CD8-positive, alpha-beta T cell (primary cell): ENCODE measurements at regions of chr19 and their contacts with region 1.

Region 1: DNA sequence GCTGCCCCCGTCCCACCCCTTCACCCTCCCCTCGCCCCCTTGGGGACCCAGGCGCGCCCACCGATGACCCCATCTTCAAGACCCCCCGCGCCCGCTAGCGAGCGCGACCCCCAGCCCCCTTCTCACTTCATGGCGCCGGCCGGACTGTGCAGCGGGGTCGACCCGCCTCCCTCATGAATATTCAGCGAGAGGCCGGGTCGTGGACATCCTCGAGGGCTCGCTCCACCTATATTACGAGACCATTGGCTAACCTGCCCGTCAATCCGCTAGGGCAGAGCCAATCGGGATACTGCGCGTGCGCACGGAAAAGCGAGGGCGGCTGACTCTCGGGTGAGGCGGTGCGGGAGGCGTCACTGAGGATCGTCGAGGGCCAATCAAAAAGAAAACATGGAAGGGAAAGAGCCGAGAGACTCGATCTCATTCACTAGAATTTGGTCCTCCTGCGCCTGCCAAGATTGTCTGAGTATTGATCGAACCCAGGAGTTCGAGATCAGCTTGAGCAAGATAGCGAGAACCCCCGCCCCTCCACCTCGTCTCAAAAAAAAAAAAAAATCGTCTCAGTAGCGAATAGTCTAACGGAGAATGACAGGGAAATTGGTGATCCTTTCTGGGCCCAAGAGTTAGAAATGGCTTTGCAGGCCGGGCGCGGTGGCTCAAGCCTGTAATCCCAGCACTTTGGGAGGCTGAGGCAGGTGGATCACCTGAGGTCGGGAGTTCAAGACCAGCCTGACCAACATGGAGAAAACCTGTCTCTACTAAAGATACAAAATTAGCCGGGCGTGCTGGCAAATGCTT is at the start of gene ERCC2:
- DNase-seq: peak; percentile 99 to 100 (median 99)
- ATAC-seq: peak; percentile 99
- H3K4me3 ChIP-seq: peak within 1 kb of the TSS; percentile 84 to 89
- H3K4me3 Mint-ChIP-seq: peak within 1 kb of the TSS; percentile 95
- H3K27ac ChIP-seq: peak within 1 kb of the TSS; percentile 54 to 90
- H3K27ac Mint-ChIP-seq: peak within 1 kb of the TSS; percentile 99
- H3K4me1 ChIP-seq: peaks cover 7% of the 10 kb centered on the region
- H3K4me1 Mint-ChIP-seq: peaks cover 14% of the 10 kb centered on the region
- H3K27me3 ChIP-seq: no peaks in the 10 kb centered on the region
- H3K27me3 Mint-ChIP-seq: no peaks in the 10 kb centered on the region
- CTCF ChIP-seq: no peak
- total RNA-seq, gene ERCC2: 9.1 to 11.8 TPM

Region 2: GRCh38 chr19:45092747-45093678 is 277.6 kb before region 1 on chr19 and contains the start of gene PPP1R37:
- CTCF ChIA-PET with region 1: no interaction called
- POLR2A ChIA-PET with region 1: no interaction called
- intact Hi-C with region 1: loop called in 1 of 2 experiments (anchors 2 kb)
- DNase-seq: peak; percentile 76 to 97 (median 92)
- ATAC-seq: peak; percentile 76
- H3K4me3 ChIP-seq: peak within 1 kb of the TSS; percentile 64 to 88
- H3K4me3 Mint-ChIP-seq: peak within 1 kb of the TSS; percentile 93
- H3K27ac ChIP-seq: peak within 1 kb of the TSS; percentile 84 to 96
- H3K27ac Mint-ChIP-seq: peak within 1 kb of the TSS; percentile 97
- H3K4me1 ChIP-seq: peaks cover 51% of the 10 kb centered on the region
- H3K4me1 Mint-ChIP-seq: peaks cover 67% of the 10 kb centered on the region
- H3K27me3 ChIP-seq: no peaks in the 10 kb centered on the region
- H3K27me3 Mint-ChIP-seq: no peaks in the 10 kb centered on the region
- CTCF ChIP-seq: peak; percentile 43
- total RNA-seq, gene PPP1R37: 19.3 to 19.9 TPM

Region 3: DNA sequence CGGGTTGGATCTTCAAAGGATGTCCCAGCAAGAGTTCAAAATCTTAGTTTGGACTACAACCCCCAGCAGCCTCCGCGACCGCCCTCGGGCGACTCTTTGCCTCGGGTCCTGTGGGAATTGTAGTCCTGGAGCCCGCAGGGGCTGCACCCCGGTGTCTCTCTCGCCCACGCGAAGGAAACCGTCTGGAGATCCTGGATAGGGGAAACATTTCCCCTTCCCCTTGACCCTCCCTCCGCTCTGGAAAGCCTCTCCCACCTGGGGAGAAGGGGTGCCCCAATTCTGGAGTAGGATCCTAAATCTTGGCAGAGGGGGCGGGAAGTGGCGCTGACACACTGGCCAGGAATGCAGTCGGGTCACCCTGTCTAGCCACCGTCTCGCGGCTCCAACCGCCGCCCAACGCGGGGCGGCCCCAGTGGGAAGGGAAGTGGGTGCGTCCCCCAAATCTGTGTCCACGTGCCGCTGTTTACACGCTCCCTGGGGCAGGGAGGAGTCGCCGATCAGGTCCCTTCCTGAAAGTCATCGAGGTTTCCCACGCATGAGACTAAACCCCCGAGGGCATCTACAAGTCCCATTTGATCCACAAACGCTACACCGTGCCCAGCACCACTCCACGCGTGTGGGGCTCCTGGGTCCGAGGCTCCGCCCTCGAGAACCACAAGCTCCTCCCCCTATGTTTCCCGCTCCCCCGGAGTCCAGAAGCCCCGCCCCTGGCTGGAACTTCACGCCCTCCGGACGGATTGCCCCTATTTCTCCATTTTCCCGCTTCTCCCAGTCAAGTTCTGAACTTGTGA is 35.0 kb after region 1 on chr19:
- CTCF ChIA-PET with region 1: no interaction called
- POLR2A ChIA-PET with region 1: no interaction called
- intact Hi-C with region 1: loop called (anchors 1 kb)
- DNase-seq: peak; percentile 69 to 89 (median 85)
- ATAC-seq: peak; percentile 63
- H3K4me3 ChIP-seq: peak overlapping the region; percentile 63 to 85
- H3K4me3 Mint-ChIP-seq: peak overlapping the region; percentile 97
- H3K27ac ChIP-seq: peak overlapping the region; percentile 68 to 92
- H3K27ac Mint-ChIP-seq: peak overlapping the region; percentile 95
- H3K4me1 ChIP-seq: peaks cover 25% of the 10 kb centered on the region
- H3K4me1 Mint-ChIP-seq: peaks cover 31% of the 10 kb centered on the region
- H3K27me3 ChIP-seq: peaks cover 16 to 26% of the 10 kb centered on the region in 2 experiments
- H3K27me3 Mint-ChIP-seq: peaks cover 26% of the 10 kb centered on the region
- CTCF ChIP-seq: no peak

Region 4: DNA sequence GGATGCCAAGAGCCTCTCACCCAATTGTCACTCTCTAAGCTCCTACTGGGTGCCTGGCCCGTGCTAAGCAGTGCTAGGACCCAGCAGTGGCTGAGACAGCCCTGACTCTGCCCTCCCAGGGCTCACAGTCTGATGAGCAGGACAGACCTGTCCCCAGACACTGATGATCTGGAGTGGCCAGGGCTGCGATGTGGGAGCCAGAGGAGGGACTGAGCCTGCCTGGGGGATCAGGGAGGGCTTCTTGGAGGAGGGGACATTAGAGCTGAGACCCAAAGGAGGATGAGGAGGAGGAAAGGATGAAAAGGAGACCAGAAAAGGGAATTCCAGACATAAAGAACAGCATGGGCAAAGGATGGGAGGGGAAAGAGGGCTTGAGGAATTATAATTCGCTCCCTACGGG is 46.5 kb after region 1 on chr19:
- CTCF ChIA-PET with region 1: no interaction called
- POLR2A ChIA-PET with region 1: no interaction called
- intact Hi-C with region 1: no loop called
- DNase-seq: no peak
- ATAC-seq: no peak
- H3K4me3 ChIP-seq: no peak overlapping the region
- H3K4me3 Mint-ChIP-seq: no peak overlapping the region
- H3K27ac ChIP-seq: no peak overlapping the region
- H3K27ac Mint-ChIP-seq: no peak overlapping the region
- H3K4me1 ChIP-seq: peaks cover 10% of the 10 kb centered on the region
- H3K4me1 Mint-ChIP-seq: peaks cover 22% of the 10 kb centered on the region
- H3K27me3 ChIP-seq: no peaks in the 10 kb centered on the region
- H3K27me3 Mint-ChIP-seq: no peaks in the 10 kb centered on the region
- CTCF ChIP-seq: no peak

Region 5: DNA sequence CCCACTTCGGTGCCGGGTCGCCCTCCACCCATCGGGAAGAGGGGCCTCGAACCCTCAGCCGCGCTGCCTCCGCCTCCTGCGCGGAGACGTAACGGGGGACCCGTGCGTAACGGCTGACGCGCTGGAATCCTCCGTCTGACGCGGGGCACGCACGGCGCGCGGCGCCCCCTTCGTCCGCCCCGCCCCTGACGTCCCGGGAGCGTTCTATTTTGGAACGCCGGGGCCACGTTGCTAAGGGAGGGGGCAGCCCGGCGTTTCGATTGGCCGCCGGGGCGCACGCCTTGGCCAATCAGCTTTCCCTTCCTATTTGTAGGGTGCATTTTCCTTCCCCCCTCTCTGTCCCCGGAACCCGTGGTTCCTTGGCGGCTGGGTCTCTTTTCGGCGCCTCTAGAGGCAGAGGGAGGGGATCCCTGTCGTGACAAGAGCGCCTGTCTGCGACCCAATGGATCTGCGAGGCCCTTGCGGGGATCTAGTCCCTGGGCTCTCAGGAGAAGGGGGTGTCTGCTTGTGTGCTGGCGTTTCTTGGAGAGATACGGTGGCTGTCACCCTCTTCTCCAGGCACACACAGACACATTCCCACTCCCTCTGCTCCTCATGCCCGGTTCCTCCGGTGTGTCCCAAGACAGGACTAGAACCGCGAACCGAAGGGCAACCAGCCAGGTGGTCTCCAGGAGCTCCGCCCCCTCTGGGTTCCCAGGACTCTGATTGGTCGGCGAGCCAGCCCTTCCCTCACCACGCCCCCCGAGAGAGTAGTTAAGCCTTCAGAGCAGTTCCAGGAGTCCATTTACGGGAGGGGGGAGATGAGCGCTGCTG is 98.7 kb after region 1 on chr19:
- CTCF ChIA-PET with region 1: no interaction called
- POLR2A ChIA-PET with region 1: no interaction called
- intact Hi-C with region 1: no loop called
- DNase-seq: peak; percentile 81 to 97 (median 93)
- ATAC-seq: peak; percentile 63
- H3K4me3 ChIP-seq: peak overlapping the region; percentile 85 to 98
- H3K4me3 Mint-ChIP-seq: peak overlapping the region; percentile 93
- H3K27ac ChIP-seq: peak overlapping the region; percentile 99 to 100
- H3K27ac Mint-ChIP-seq: peak overlapping the region; percentile 98
- H3K4me1 ChIP-seq: peaks cover 16% of the 10 kb centered on the region
- H3K4me1 Mint-ChIP-seq: peaks cover 17% of the 10 kb centered on the region
- H3K27me3 ChIP-seq: no peaks in the 10 kb centered on the region
- H3K27me3 Mint-ChIP-seq: peaks cover 15% of the 10 kb centered on the region
- CTCF ChIP-seq: no peak

Region 6: GRCh38 chr19:45506246-45506990 is 135.8 kb after region 1 on chr19:
- CTCF ChIA-PET with region 1: no interaction called
- POLR2A ChIA-PET with region 1: no interaction called
- intact Hi-C with region 1: loop called in 1 of 2 experiments (anchors 1 kb)
- DNase-seq: peak; percentile 93 to 99 (median 97)
- ATAC-seq: peak; percentile 79
- H3K4me3 ChIP-seq: peak overlapping the region; percentile 74 to 90
- H3K4me3 Mint-ChIP-seq: peak overlapping the region; percentile 88
- H3K27ac ChIP-seq: peak overlapping the region; percentile 85 to 91
- H3K27ac Mint-ChIP-seq: peak overlapping the region; percentile 93
- H3K4me1 ChIP-seq: peaks cover 33% of the 10 kb centered on the region
- H3K4me1 Mint-ChIP-seq: peaks cover 39% of the 10 kb centered on the region
- H3K27me3 ChIP-seq: no peaks in the 10 kb centered on the region
- H3K27me3 Mint-ChIP-seq: no peaks in the 10 kb centered on the region
- CTCF ChIP-seq: peak; percentile 32

Region 7: DNA sequence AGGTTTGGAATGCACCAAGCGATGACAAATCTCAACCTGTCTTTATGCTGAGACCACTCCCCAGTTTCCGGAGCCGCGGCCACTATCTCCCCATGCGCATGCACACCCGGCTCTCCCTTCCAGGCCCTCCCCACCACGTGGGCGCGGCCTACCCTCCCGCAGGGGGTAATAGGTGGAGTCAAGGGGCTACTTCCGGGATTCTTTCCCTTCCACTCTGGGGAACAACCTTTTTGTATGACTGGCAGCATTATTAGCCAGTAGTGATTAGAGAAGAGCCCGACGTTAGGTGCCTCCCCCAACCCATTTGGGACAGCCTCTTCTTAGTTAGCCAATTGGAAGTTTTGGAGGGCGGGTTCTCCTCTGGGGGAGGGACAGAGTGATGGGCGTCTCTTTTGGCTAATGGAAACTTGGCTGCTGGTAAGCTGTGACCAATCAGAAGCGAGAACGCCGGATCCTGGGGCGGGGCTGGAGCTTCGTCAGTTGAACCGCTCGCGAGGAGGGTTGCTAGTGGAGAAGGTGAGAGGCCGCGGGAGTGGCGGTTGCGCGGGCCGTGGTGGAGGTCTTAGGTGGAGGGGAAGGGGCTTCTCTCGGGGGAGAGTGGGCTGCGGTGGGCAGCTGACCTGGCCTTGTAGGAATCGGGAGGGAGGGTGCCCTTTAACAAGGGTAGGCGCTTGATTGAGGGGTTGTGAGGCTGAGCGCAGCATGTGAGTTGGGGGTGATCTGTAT is 624.5 kb after region 1 on chr19 and contains the start of gene CCDC61:
- CTCF ChIA-PET with region 1: no interaction called
- POLR2A ChIA-PET with region 1: no interaction called
- intact Hi-C with region 1: loop called in 1 of 2 experiments (anchors 10 kb)
- DNase-seq: peak; percentile 92 to 99 (median 95)
- ATAC-seq: peak; percentile 95
- H3K4me3 ChIP-seq: peak within 1 kb of the TSS; percentile 73 to 77
- H3K4me3 Mint-ChIP-seq: no peak within 1 kb of the TSS
- H3K27ac ChIP-seq: peak within 1 kb of the TSS; percentile 64 to 74
- H3K27ac Mint-ChIP-seq: no peak within 1 kb of the TSS
- H3K4me1 ChIP-seq: peaks cover 16% of the 10 kb centered on the region
- H3K4me1 Mint-ChIP-seq: peaks cover 25% of the 10 kb centered on the region
- H3K27me3 ChIP-seq: no peaks in the 10 kb centered on the region
- H3K27me3 Mint-ChIP-seq: peaks cover 7% of the 10 kb centered on the region
- CTCF ChIP-seq: no peak
- total RNA-seq, gene CCDC61: 4.9 to 6.2 TPM